Dorsolateral prefrontal cortex (tissue), 120 donors: ENCODE measurements at regions of chr6 and their contacts with region 1.

Region 1: DNA sequence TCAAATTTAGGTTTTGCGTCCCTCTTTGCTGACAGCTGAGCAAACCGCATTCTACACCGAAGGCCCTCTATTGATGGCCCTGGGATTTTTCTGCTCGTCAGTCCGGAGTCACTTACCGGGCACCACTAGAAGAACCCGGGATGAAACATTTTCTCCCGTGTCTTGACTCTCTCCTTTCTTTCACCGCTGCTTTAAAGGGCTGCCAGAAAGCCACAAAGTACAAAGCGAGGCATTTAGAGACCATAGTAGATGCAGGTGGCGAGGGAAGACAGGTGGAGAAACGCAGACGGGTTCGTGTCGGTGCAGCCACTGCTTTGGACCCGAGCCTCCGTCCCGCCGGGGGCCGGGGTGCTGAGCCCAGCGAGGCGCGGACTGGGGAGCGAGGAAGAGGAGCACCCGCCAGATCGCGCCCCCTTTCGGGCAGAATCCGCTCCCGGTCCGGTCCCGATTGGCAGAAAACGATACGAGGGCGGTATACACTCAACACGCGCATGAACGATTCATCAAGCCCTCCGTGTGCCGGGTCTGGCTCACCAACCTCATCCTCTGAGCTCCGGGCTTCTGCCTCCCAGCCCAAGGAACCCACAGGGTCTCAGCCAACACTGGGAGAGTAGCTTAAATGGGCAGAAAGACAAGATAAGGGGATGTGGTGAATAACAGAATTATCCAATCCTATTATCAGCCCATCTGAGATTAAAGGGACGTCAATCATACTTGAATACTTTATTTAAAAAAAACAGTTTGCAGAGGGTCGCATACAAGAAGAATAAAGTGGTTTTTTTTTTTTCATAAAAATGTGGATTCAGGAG is 84.9 kb downstream of the TRIM27 start:
- DNase-seq: peak; percentile 66 to 92 (median 80)
- H3K4me3 ChIP-seq: peak overlapping the region; percentile 44 to 90 (median 77)
- H3K27ac ChIP-seq: peak overlapping the region in 56 of 59 donors; percentile 2 to 90 (median 70)
- H3K27me3 ChIP-seq: peaks cover 0 to 47% (median 7%) of the 10 kb centered on the region in 45 donors
- CTCF ChIP-seq: peak in 55 of 56 donors; percentile 37 to 80 (median 62)

Region 2: GRCh38 chr6:28589234-28589956 is 249.4 kb before region 1 on chr6:
- intact Hi-C with region 1: no loop called
- DNase-seq: peak in 4 of 10 donors; percentile 46 to 69 (median 48)
- H3K4me3 ChIP-seq: peak overlapping the region in 52 of 59 donors; percentile 2 to 79 (median 38)
- H3K27ac ChIP-seq: peak overlapping the region in 8 of 59 donors; percentile 1 to 49 (median 31)
- H3K27me3 ChIP-seq: peaks cover 0 to 100% (median 28%) of the 10 kb centered on the region in 45 donors
- CTCF ChIP-seq: no peak

Region 3: GRCh38 chr6:28683944-28684538 is 154.8 kb before region 1 on chr6:
- intact Hi-C with region 1: loop called in 1 of 2 experiments (anchors 5 kb)
- DNase-seq: peak in 1 of 10 donors; percentile 16
- H3K4me3 ChIP-seq: peak overlapping the region in 2 of 59 donors; percentile 4 to 19
- H3K27ac ChIP-seq: no peak overlapping the region
- H3K27me3 ChIP-seq: peaks cover 0 to 76% (median 26%) of the 10 kb centered on the region in 45 donors
- CTCF ChIP-seq: peak; percentile 17 to 68 (median 53)

Region 4: DNA sequence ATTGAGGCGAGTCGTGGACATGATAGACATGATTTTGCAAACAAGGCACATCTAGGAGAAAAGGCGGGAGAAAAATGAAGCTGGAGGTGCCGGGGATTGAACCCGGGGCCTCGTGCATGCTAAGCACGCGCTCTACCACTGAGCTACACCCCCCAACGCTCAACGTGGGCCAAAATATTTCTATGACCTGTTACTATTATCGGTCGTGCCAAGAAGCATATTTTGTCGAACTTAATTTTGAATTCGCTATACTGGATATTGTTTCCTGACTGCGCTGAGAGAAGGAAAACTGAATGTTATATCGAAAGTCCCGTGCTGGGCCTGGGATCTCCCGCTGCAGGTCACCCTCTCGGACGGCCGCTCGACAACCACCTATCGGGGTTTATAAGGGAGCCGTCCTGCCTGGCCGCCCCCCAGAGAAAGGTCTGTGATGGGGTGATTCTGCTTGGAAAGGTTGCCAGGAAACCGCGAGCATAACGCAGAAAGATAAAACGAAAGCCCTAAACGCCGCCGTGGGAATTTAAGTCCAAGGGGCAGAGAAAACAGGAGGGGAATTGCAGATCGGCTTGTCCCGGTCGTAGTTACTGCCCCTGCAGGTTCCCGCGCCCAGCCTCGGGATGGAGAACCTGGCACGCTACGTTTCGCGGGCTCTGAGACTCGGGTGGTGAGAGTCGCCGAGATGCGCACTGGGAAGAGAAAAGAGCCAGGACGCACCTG is 24.9 kb after region 1 on chr6:
- intact Hi-C with region 1: loop called (anchors 1 kb)
- DNase-seq: peak; percentile 67 to 87 (median 79)
- H3K4me3 ChIP-seq: peak overlapping the region; percentile 52 to 97 (median 82)
- H3K27ac ChIP-seq: peak overlapping the region in 56 of 59 donors; percentile 1 to 92 (median 74)
- H3K27me3 ChIP-seq: no peaks in the 10 kb centered on the region
- CTCF ChIP-seq: peak in 17 of 56 donors; percentile 2 to 40 (median 16)

Region 5: DNA sequence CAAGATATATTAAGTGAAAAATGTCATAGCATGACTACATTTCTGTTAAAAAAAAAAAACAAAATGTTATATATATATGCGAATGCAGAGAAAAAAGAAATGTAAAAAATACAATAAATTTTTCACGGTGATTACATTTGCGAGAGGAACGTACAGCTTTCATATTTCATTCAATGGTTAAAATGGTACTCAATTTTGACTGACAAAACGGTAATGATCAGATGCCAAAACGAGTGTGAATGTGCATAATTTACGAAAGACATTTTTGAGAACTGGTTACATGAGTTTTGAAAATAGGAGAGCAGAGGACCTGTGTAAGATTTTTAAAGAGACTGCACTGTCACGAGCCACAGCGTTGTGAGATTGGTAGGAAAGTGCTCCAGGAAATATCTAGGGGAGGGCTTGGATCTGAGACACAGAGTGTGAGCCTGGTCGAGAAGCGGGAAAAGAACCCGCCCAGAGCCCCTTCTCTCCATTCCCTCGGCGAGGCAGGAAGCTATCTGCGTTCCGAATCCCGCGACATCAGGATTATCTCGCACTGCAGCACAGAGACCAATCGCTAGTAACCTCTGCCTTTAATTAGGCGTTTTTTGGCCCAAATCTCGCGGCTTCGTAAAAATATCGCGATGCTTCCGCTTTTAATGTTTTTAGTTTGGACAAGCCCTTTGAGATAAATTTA is 56.4 kb after region 1 on chr6:
- intact Hi-C with region 1: loop called (anchors 1 to 5 kb)
- DNase-seq: peak; percentile 58 to 96 (median 86)
- H3K4me3 ChIP-seq: peak overlapping the region; percentile 50 to 97 (median 81)
- H3K27ac ChIP-seq: peak overlapping the region; percentile 92 to 100 (median 98)
- H3K27me3 ChIP-seq: no peaks in the 10 kb centered on the region
- CTCF ChIP-seq: peak in 9 of 56 donors; percentile 5 to 28 (median 16)

Region 6: GRCh38 chr6:28981833-28982475 is 143.1 kb after region 1 on chr6:
- intact Hi-C with region 1: loop called in 1 of 2 experiments (anchors 1 kb)
- DNase-seq: peak; percentile 38 to 82 (median 66)
- H3K4me3 ChIP-seq: peak overlapping the region; percentile 49 to 98 (median 81)
- H3K27ac ChIP-seq: peak overlapping the region; percentile 5 to 96 (median 86)
- H3K27me3 ChIP-seq: no peaks in the 10 kb centered on the region
- CTCF ChIP-seq: peak in 26 of 56 donors; percentile 1 to 60 (median 19)

Region 7: GRCh38 chr6:29016559-29017427 is 178.0 kb after region 1 on chr6:
- intact Hi-C with region 1: loop called (anchors 1 to 2 kb)
- DNase-seq: peak; percentile 50 to 86 (median 70)
- H3K4me3 ChIP-seq: peak overlapping the region; percentile 26 to 80 (median 59)
- H3K27ac ChIP-seq: peak overlapping the region in 1 of 59 donors; percentile 38
- H3K27me3 ChIP-seq: peaks cover 0 to 76% (median 34%) of the 10 kb centered on the region in 45 donors
- CTCF ChIP-seq: peak; percentile 65 to 96 (median 86)